WTC11 (cell line): ENCODE measurements at regions of chr10 and their contacts with region 1.

Region 1: DNA sequence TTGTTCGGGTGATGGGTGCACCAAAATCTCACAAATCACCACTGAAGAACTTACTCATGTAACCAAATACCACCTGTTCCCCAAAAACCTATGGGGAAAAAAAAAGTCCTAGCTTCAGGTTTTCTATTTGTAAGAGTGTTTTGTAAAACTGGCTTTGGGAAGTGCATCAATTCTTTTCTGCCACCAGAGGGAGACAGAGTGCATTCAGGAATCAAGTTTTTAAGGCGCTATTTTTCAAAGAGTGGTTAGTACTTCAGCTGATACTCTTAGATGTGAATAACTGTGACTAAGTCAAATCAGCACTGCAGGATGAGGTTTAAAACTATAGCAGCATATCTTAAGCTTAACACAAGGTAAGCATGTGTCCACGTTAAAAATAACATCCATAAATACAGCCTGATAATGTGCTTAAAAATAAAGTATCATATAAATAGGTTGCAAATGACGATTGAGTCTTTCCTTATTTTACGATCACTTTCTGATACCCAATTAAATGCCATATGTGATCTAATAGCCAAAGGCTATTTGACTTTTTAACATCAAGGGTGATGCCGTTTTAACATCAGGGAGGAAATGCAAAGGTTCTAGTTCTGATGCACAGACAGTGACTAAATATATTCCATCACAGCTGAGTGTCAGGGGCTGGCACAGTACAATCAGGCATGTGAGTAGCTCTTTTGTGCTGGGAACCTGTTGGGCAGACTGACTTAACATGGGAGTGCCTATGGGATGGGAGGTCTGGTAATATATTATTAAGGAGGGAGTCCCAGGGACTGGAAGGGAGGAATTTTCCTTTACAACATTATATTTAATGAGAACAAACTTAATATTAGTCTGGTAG is 10.6 kb upstream of the LYZL2 start:
- DNase-seq: no peak
- ATAC-seq: no peak
- H3K4me3 Mint-ChIP-seq: no peak overlapping the region
- H3K27ac Mint-ChIP-seq: no peak overlapping the region
- H3K4me1 Mint-ChIP-seq: peaks cover 43% of the 10 kb centered on the region
- H3K27me3 Mint-ChIP-seq: no peaks in the 10 kb centered on the region
- CTCF ChIP-seq: peak; percentile 74

Region 2: GRCh38 chr10:30491916-30492515 is 148.2 kb before region 1 on chr10:
- CTCF ChIA-PET with region 1: no interaction called
- POLR2A ChIA-PET with region 1: no interaction called
- DNase-seq: no peak
- ATAC-seq: no peak
- H3K4me3 Mint-ChIP-seq: no peak overlapping the region
- H3K27ac Mint-ChIP-seq: no peak overlapping the region
- H3K4me1 Mint-ChIP-seq: peaks cover 12% of the 10 kb centered on the region
- H3K27me3 Mint-ChIP-seq: peaks cover 3% of the 10 kb centered on the region; the same call in 1 of the 2 replicates
- CTCF ChIP-seq: no peak

Region 3: GRCh38 chr10:30573721-30574431 is 66.3 kb before region 1 on chr10:
- CTCF ChIA-PET with region 1: no interaction called
- POLR2A ChIA-PET with region 1: no interaction called
- DNase-seq: no peak
- ATAC-seq: peak; percentile 56
- H3K4me3 Mint-ChIP-seq: no peak overlapping the region
- H3K27ac Mint-ChIP-seq: peak overlapping the region; percentile 31
- H3K4me1 Mint-ChIP-seq: peaks cover 22% of the 10 kb centered on the region
- H3K27me3 Mint-ChIP-seq: no peaks in the 10 kb centered on the region
- CTCF ChIP-seq: no peak

Region 4: GRCh38 chr10:30606313-30606712 is 33.9 kb before region 1 on chr10:
- CTCF ChIA-PET with region 1: interaction called, 13 read pairs
- POLR2A ChIA-PET with region 1: no interaction called
- DNase-seq: no peak
- ATAC-seq: no peak
- H3K4me3 Mint-ChIP-seq: no peak overlapping the region
- H3K27ac Mint-ChIP-seq: no peak overlapping the region
- H3K4me1 Mint-ChIP-seq: peaks cover 15% of the 10 kb centered on the region
- H3K27me3 Mint-ChIP-seq: peaks cover 9% of the 10 kb centered on the region
- CTCF ChIP-seq: no peak

Region 5: GRCh38 chr10:30671026-30671616 is 31.0 kb after region 1 on chr10:
- CTCF ChIA-PET with region 1: interaction called, 33 read pairs
- POLR2A ChIA-PET with region 1: no interaction called
- DNase-seq: peak; percentile 24
- ATAC-seq: peak; percentile 80
- H3K4me3 Mint-ChIP-seq: no peak overlapping the region
- H3K27ac Mint-ChIP-seq: no peak overlapping the region
- H3K4me1 Mint-ChIP-seq: peaks cover 6% of the 10 kb centered on the region; the same call in 1 of the 2 replicates
- H3K27me3 Mint-ChIP-seq: no peaks in the 10 kb centered on the region
- CTCF ChIP-seq: peak; percentile 73

Region 6: GRCh38 chr10:30727524-30727923 is 87.4 kb after region 1 on chr10:
- CTCF ChIA-PET with region 1: no interaction called
- POLR2A ChIA-PET with region 1: no interaction called
- DNase-seq: no peak
- ATAC-seq: no peak
- H3K4me3 Mint-ChIP-seq: no peak overlapping the region
- H3K27ac Mint-ChIP-seq: no peak overlapping the region
- H3K4me1 Mint-ChIP-seq: peaks cover 32% of the 10 kb centered on the region
- H3K27me3 Mint-ChIP-seq: peaks cover 2% of the 10 kb centered on the region; the same call in 1 of the 2 replicates
- CTCF ChIP-seq: no peak